Activated CD8-positive, alpha-beta T cell treated with anti-CD3 and anti-CD28 coated beads for 36 hours (primary cell): ENCODE measurements at regions of chr12 and their contacts with region 1.

Region 1: GRCh38 chr12:111451649-111452129 is 46.0 kb downstream of the SH2B3 start:
- DNase-seq: no peak
- ATAC-seq: peak; percentile 53
- H3K4me3 Mint-ChIP-seq: no peak overlapping the region
- H3K27ac Mint-ChIP-seq: peak overlapping the region; percentile 21
- H3K4me1 Mint-ChIP-seq: peaks cover 40% of the 10 kb centered on the region
- H3K27me3 Mint-ChIP-seq: no peaks in the 10 kb centered on the region
- CTCF ChIP-seq: peak; percentile 92

Region 2: GRCh38 chr12:111330800-111331752 is 120.6 kb before region 1 on chr12:
- CTCF ChIA-PET with region 1: interaction called, 21 read pairs
- POLR2A ChIA-PET with region 1: no interaction called
- intact Hi-C with region 1: no loop called
- DNase-seq: no peak
- ATAC-seq: peak; percentile 68
- H3K4me3 Mint-ChIP-seq: no peak overlapping the region
- H3K27ac Mint-ChIP-seq: no peak overlapping the region
- H3K4me1 Mint-ChIP-seq: no peaks in the 10 kb centered on the region
- H3K27me3 Mint-ChIP-seq: peaks cover 7% of the 10 kb centered on the region
- CTCF ChIP-seq: peak; percentile 61

Region 3: GRCh38 chr12:111341426-111342065 is 110.1 kb before region 1 on chr12:
- CTCF ChIA-PET with region 1: no interaction called
- POLR2A ChIA-PET with region 1: no interaction called
- intact Hi-C with region 1: no loop called
- DNase-seq: no peak
- ATAC-seq: no peak
- H3K4me3 Mint-ChIP-seq: no peak overlapping the region
- H3K27ac Mint-ChIP-seq: no peak overlapping the region
- H3K4me1 Mint-ChIP-seq: no peaks in the 10 kb centered on the region
- H3K27me3 Mint-ChIP-seq: no peaks in the 10 kb centered on the region
- CTCF ChIP-seq: no peak

Region 4: GRCh38 chr12:111405149-111405860 is 46.4 kb before region 1 on chr12:
- CTCF ChIA-PET with region 1: interaction called, 1,222 read pairs
- POLR2A ChIA-PET with region 1: interaction called, 33 read pairs
- intact Hi-C with region 1: no loop called
- DNase-seq: peak; percentile 100
- ATAC-seq: peak; percentile 81
- H3K4me3 Mint-ChIP-seq: peak overlapping the region; percentile 73
- H3K27ac Mint-ChIP-seq: peak overlapping the region; percentile 96
- H3K4me1 Mint-ChIP-seq: peaks cover 50% of the 10 kb centered on the region
- H3K27me3 Mint-ChIP-seq: no peaks in the 10 kb centered on the region
- CTCF ChIP-seq: peak; percentile 58

Region 5: GRCh38 chr12:111424793-111425251 is 26.9 kb before region 1 on chr12:
- CTCF ChIA-PET with region 1: interaction called, 44 read pairs
- POLR2A ChIA-PET with region 1: interaction called, 9 read pairs
- intact Hi-C with region 1: no loop called
- DNase-seq: peak; percentile 40
- ATAC-seq: no peak
- H3K4me3 Mint-ChIP-seq: no peak overlapping the region
- H3K27ac Mint-ChIP-seq: peak overlapping the region; percentile 80
- H3K4me1 Mint-ChIP-seq: peaks cover 63% of the 10 kb centered on the region
- H3K27me3 Mint-ChIP-seq: no peaks in the 10 kb centered on the region
- CTCF ChIP-seq: peak; percentile 46

Region 6: DNA sequence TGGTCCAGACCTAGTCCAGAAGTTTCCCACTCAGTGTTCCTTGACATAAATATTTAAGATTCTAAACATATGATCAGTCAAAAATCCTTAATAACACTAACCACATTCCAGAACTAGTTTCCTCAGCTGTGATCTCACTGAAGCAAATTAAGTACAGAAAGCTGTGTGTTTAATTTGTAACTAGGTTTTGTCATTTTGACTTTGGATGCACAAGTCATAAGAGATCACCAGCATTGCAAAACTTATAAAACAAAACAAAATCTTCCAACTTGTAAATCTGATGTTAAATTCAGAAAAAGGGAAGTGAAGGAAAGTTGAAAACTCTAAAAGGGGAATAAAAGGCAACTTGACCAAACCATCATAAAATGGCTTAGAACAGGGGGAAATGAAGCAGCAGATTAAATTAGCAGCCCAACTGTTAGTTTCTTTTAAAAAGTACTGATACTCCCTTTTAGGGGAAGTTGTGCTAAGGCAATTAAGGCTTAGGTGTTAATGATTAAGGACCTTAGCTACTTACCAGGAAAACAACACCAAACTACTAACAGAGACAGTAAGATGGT is 10.6 kb after region 1 on chr12:
- CTCF ChIA-PET with region 1: interaction called, 46 read pairs
- POLR2A ChIA-PET with region 1: interaction called, 4 read pairs
- intact Hi-C with region 1: no loop called
- DNase-seq: no peak
- ATAC-seq: no peak
- H3K4me3 Mint-ChIP-seq: no peak overlapping the region
- H3K27ac Mint-ChIP-seq: no peak overlapping the region
- H3K4me1 Mint-ChIP-seq: peaks cover 1% of the 10 kb centered on the region
- H3K27me3 Mint-ChIP-seq: no peaks in the 10 kb centered on the region
- CTCF ChIP-seq: no peak

Region 7: GRCh38 chr12:111482462-111482861 is 30.8 kb after region 1 on chr12:
- CTCF ChIA-PET with region 1: interaction called, 19 read pairs
- POLR2A ChIA-PET with region 1: no interaction called
- intact Hi-C with region 1: no loop called
- DNase-seq: no peak
- ATAC-seq: no peak
- H3K4me3 Mint-ChIP-seq: no peak overlapping the region
- H3K27ac Mint-ChIP-seq: no peak overlapping the region
- H3K4me1 Mint-ChIP-seq: no peaks in the 10 kb centered on the region
- H3K27me3 Mint-ChIP-seq: no peaks in the 10 kb centered on the region
- CTCF ChIP-seq: no peak